Endothelial cell of umbilical vein (primary cell): ENCODE measurements at regions of chr21 and their contacts with region 1.

Region 1: DNA sequence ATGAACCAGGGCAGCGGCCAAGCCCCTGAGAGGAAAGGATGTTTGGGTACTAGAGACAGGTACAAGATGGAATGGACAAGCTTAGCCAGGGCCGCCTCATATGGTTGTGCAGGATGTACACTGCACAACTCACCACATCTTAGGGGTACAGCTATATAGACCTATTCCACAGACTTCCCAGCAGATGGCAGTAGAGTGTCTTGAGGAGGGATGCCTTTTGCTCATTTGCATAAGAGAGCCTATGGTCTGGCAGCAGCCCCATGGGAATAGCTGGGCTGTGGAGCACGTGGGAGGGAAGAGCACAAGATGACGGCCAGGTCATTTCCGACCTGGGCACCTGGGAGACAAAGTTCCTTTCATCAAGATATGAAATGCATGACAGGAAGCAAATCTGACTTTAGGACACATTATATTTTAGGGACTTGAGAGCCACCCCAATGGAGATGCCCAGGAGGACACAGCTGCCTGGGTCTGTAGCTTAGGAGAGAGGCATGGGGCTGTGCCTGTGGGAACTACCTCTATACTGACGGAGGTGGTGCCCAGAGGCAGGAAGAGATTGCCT is 215.5 kb downstream of the KCNJ6 start:
- DNase-seq: peak; percentile 56
- H3K4me3 ChIP-seq: no peak overlapping the region
- H3K27ac ChIP-seq: no peak overlapping the region
- H3K4me1 ChIP-seq: no peaks in the 10 kb centered on the region
- H3K27me3 ChIP-seq: peaks cover 10 to 12% of the 10 kb centered on the region in 2 experiments
- CTCF ChIP-seq: peak; percentile 58 to 74
- POLR2A ChIP-seq: no peak

Region 2: GRCh38 chr21:37675202-37675801 is 25.4 kb before region 1 on chr21:
- CTCF ChIA-PET with region 1: interaction called, 11 read pairs
- POLR2A ChIA-PET with region 1: no interaction called
- dilution Hi-C with region 1: no loop called
- intact Hi-C with region 1: no loop called
- DNase-seq: peak; percentile 48
- H3K4me3 ChIP-seq: no peak overlapping the region
- H3K27ac ChIP-seq: no peak overlapping the region
- H3K4me1 ChIP-seq: peaks cover 3% of the 10 kb centered on the region
- H3K27me3 ChIP-seq: peaks cover 4 to 13% of the 10 kb centered on the region in 2 experiments
- CTCF ChIP-seq: peak; percentile 95 to 96
- POLR2A ChIP-seq: no peak

Region 3: DNA sequence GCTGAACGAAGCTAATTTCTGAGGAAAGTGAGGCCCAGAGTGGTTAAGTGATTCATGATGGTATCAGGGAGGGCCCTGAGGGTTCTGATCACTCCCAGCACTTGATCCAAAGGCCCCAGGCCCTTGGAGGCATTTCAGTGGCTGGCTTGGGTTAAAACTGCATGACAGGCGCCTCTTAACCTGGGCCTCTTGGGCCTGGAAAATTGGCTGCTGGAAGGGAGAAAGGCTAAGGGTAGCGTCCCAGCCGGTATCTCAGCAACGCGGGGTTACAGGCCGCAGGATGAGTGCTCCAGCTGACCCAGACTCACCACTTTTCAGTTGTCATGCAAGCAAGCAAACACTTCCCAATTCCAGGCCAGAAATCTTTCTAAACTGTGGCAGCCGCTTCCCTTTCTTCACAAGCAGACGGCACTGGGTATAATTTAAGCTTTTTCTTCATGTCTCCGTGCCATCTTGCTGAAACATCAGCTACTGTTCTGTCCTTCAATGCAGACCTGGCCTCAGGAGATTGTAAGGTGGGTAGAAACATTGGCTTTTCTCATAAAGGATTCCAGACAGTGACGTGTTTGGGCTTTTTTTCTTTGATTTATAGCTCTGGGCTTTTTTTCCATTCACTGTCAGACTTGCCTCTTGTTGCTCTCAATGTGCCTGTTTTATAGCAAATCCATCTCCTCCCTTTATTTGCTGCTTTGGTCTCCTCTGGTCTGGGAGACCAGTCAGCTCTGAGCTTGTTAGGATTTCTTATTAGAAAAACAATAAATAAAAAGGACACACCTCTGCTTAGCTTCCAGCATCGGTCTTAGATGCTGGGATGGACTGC is 13.5 kb before region 1 on chr21:
- CTCF ChIA-PET with region 1: interaction called, 11 read pairs
- POLR2A ChIA-PET with region 1: interaction called, 5 read pairs
- dilution Hi-C with region 1: no loop called
- intact Hi-C with region 1: no loop called
- DNase-seq: no peak
- H3K4me3 ChIP-seq: no peak overlapping the region
- H3K27ac ChIP-seq: no peak overlapping the region
- H3K4me1 ChIP-seq: no peaks in the 10 kb centered on the region
- H3K27me3 ChIP-seq: peaks cover 8 to 14% of the 10 kb centered on the region in 2 experiments
- CTCF ChIP-seq: no peak
- POLR2A ChIP-seq: no peak

Region 4: DNA sequence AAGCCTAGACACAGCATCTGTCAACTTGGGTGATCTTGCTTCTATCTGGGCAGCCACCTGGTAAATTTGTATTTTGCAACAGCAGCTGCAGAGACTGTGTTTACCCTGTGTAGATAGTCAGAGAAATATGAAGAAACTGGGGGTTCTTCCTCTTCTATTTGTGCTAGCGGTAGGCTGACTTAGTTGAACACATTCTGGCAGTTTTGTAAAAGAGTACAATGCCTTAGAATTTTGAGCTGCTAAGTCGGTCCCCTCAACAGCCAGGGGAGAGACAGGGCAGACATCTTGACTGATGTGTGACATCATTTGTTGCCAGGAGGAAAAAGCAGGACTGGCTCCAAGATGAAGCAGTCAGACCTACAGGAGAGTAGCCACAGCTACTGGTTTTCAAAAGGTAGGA is 161.8 kb after region 1 on chr21:
- CTCF ChIA-PET with region 1: no interaction called
- POLR2A ChIA-PET with region 1: no interaction called
- dilution Hi-C with region 1: no loop called
- intact Hi-C with region 1: no loop called
- DNase-seq: peak; percentile 9
- H3K4me3 ChIP-seq: no peak overlapping the region
- H3K27ac ChIP-seq: no peak overlapping the region
- H3K4me1 ChIP-seq: no peaks in the 10 kb centered on the region
- H3K27me3 ChIP-seq: peaks cover 0 to 2% of the 10 kb centered on the region in 2 experiments
- CTCF ChIP-seq: no peak
- POLR2A ChIP-seq: no peak

Region 5: DNA sequence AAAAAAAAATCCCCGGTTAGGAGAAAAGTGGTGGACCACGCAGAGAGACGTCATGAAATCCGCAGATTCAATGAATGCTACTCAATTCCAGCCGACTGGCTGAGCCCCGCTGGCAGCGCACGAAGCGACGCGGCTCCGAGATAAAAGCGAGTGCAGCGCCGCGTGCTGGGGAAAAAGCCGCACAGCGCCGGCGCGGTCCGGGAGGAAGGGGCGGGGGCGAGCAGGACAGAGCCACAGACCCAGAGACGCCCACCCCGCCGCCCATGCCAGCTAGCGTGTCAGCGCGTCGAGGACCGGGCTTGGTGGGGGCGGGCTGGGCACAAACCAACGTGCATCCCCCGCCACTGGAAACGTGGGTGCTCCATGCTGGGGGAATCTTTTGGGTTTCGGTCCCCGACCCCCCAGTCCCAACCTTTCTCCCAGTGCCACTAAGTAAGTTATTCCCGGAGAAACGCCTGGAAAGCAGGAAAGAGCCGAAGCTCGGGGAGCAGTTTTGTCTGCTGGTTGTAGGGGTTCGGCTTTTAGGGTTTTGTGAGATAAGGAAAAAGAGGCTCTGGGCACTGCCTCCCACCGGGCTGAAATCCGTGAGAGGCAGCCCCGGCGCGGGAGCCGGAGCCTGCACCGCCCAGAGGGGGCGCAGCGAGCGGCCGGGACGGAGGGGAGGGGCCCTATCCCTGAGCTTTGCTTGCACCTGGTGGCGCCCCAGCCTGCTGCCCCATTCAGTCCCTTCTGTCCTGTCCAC is 215.8 kb after region 1 on chr21 and contains the start of gene KCNJ6:
- CTCF ChIA-PET with region 1: interaction called, 11 read pairs
- POLR2A ChIA-PET with region 1: no interaction called
- dilution Hi-C with region 1: no loop called
- intact Hi-C with region 1: loop called (anchors 2 kb)
- DNase-seq: peak; percentile 47
- H3K4me3 ChIP-seq: peak within 1 kb of the TSS in 1 of 3 experiments; percentile 20
- H3K27ac ChIP-seq: no peak within 1 kb of the TSS
- H3K4me1 ChIP-seq: no peaks in the 10 kb centered on the region
- H3K27me3 ChIP-seq: peaks cover 34 to 47% of the 10 kb centered on the region in 2 experiments
- CTCF ChIP-seq: peak; percentile 51 to 77
- POLR2A ChIP-seq: no peak
- total RNA-seq, gene KCNJ6: not detected in 2 replicates